Thyroid gland (tissue), 4 donors: ENCODE measurements at regions of chr4 and their contacts with region 1.

Region 1: GRCh38 chr4:189912170-189912569 is 28.5 kb upstream of the FRG1 start:
- DNase-seq: no peak
- H3K4me3 ChIP-seq: no peak overlapping the region
- H3K27ac ChIP-seq: no peak overlapping the region
- H3K4me1 ChIP-seq: no peaks in the 10 kb centered on the region
- H3K27me3 ChIP-seq: no peaks in the 10 kb centered on the region
- CTCF ChIP-seq: peak in 2 of 6 experiments; percentile 10 to 44
- POLR2A ChIP-seq: no peak

Region 2: GRCh38 chr4:189613207-189613606 is 299.0 kb before region 1 on chr4:
- intact Hi-C with region 1: no loop called
- DNase-seq: no peak
- H3K4me3 ChIP-seq: no peak overlapping the region
- H3K27ac ChIP-seq: no peak overlapping the region
- H3K4me1 ChIP-seq: no peaks in the 10 kb centered on the region
- H3K27me3 ChIP-seq: no peaks in the 10 kb centered on the region
- CTCF ChIP-seq: no peak
- POLR2A ChIP-seq: no peak

Region 3: GRCh38 chr4:189787216-189788031 is 124.7 kb before region 1 on chr4:
- intact Hi-C with region 1: loop called (anchors 10 kb)
- DNase-seq: no peak
- H3K4me3 ChIP-seq: no peak overlapping the region
- H3K27ac ChIP-seq: no peak overlapping the region
- H3K4me1 ChIP-seq: no peaks in the 10 kb centered on the region
- H3K27me3 ChIP-seq: no peaks in the 10 kb centered on the region
- CTCF ChIP-seq: no peak
- POLR2A ChIP-seq: no peak